ENCODE measurements at regions of chr12 and their contacts with region 1.

Region 1: DNA sequence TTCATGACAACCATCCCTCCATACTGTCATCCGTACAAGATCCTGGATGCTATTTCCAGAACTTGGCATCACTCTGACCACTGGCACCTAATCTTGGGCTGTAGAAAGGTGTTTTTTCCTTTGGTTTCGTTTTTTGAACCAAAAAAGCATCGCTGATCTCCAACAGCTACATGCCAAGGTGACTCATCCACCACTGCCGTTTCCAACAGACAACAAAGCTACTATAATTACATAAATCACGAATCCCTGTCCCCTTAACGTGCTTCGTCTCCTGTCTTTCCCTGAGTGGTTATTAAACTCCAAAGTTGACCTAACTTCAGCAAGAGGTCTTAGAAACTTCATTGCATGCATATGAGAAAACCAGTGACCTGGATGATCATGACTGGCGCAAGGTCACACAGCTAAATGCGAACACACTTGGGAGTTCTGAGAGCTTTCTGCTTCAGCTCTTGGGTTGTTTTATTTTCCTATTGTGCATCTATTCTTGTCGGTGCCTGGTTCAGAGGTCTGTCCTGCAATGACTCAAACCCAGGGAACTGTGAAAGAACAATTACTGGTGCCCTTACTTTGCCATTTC is 99.9 kb downstream of the PPM1H start:
- DNase-seq: no peak
- CTCF ChIP-seq: no peak

Region 2: DNA sequence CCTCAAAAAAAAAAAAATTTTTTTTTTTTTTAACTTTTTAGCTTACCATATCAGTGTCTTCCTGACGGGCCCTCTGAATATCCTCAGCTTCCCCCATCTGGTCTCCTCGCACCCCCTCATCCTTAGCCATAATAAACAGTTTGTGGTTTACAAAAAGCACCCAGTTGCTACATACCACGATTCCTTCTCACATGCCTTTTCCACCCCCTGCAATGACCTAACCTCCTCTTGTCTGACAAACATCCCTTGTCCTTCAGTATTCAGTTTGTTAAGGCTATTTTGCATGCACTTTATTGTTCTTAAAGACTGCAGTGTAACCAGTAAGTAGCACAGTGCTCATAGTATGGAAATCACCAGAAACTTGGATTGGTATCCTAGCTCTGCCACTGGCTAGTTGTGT is 11.4 kb after region 1 on chr12:
- CTCF ChIA-PET with region 1: interaction called, 13 read pairs
- POLR2A ChIA-PET with region 1: no interaction called
- DNase-seq: no peak
- CTCF ChIP-seq: no peak

Region 3: DNA sequence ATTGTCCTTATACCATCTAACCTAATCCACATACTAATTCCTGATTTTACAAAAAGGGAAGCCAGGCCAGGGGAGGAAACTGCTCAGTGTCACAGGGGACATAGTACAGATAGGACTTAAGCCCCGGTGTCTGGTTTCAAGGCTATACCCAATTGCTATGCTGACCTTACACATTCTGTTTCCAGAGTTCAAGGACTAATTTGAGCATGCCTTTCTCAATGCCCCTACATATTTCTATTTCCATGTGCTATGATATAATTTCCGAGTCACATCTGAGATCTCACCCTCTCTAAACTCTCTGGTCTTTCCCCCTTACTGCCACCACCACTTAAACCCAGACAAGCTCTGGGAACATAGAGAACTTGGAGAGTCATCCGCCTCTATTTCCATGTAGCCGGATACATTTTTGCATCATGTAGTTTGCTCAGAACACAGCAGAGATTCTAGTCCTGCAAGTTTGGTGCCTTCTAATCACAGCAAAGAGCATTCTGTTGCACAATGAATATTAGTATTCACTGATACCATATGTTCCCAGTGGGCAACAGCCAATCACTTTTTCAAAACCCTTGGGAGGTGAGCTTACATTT is 65.7 kb after region 1 on chr12:
- CTCF ChIA-PET with region 1: no interaction called
- POLR2A ChIA-PET with region 1: no interaction called
- DNase-seq: no peak
- CTCF ChIP-seq: no peak

Measured in GM10248 (cell line).